Endothelial cell of umbilical vein (primary cell): ENCODE measurements at regions of chr9 and their contacts with region 1.

Region 1: GRCh38 chr9:136400038-136400834 is at the start of gene SNAPC4:
- DNase-seq: peak; percentile 82
- H3K4me3 ChIP-seq: peak within 1 kb of the TSS; percentile 55 to 96 (median 62)
- H3K27ac ChIP-seq: peak within 1 kb of the TSS; percentile 27
- H3K4me1 ChIP-seq: peaks cover 10% of the 10 kb centered on the region
- H3K27me3 ChIP-seq: no peaks in the 10 kb centered on the region
- CTCF ChIP-seq: peak; percentile 88 to 97
- POLR2A ChIP-seq: peak; percentile 90
- total RNA-seq, gene SNAPC4: 14.7 and 17.5 TPM in 2 replicates

Region 2: GRCh38 chr9:136051517-136052432 is 348.5 kb before region 1 on chr9:
- CTCF ChIA-PET with region 1: no interaction called
- POLR2A ChIA-PET with region 1: no interaction called
- dilution Hi-C with region 1: no loop called
- intact Hi-C with region 1: no loop called
- DNase-seq: peak; percentile 96
- H3K4me3 ChIP-seq: peak overlapping the region; percentile 49 to 66 (median 53)
- H3K27ac ChIP-seq: peak overlapping the region; percentile 66
- H3K4me1 ChIP-seq: peaks cover 33% of the 10 kb centered on the region
- H3K27me3 ChIP-seq: no peaks in the 10 kb centered on the region
- CTCF ChIP-seq: no peak
- POLR2A ChIP-seq: peak; percentile 47

Region 3: DNA sequence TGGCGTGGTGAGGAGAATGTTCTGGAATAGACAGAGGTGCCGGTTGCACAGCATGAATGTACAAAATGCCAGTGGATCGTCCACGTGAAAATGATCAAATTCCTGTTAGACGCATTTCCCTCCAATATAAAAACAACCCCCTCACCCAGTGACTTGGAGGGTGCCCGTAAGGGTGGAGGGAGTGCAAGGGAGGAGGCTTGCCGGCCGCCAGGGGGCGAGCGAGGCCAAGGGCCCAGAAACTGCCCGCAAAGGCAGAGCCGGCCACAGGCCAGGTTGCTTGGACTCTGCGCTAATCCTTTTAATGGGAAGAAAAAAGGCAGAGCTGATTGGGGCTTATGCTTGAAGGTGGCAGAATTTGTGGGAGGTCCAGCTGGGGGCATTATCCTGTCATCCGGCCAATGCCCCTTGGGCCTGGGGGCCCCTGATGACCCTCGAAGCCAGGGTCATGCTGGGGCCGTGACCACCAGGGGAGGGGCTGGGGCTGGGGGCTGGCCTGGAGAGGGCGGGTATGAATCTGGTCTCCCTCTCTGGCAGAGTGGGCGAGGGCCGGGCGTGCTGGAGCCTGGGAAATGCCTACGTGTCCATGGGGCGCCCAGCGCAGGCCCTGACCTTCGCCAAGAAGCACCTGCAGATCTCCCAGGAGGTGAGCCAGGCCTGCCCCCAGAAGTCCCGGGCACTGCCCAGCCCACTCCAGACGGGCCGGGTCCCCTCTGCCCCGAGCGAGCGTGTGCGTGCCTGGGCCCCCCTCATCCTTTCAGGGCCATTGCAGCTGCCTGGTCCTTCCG is 60.9 kb before region 1 on chr9:
- CTCF ChIA-PET with region 1: no interaction called
- POLR2A ChIA-PET with region 1: no interaction called
- dilution Hi-C with region 1: no loop called
- intact Hi-C with region 1: loop called (anchors 1 kb)
- DNase-seq: peak; percentile 49
- H3K4me3 ChIP-seq: no peak overlapping the region
- H3K27ac ChIP-seq: no peak overlapping the region
- H3K4me1 ChIP-seq: peaks cover 5% of the 10 kb centered on the region
- H3K27me3 ChIP-seq: no peaks in the 10 kb centered on the region
- CTCF ChIP-seq: peak; percentile 92 to 94
- POLR2A ChIP-seq: no peak

Region 4: DNA sequence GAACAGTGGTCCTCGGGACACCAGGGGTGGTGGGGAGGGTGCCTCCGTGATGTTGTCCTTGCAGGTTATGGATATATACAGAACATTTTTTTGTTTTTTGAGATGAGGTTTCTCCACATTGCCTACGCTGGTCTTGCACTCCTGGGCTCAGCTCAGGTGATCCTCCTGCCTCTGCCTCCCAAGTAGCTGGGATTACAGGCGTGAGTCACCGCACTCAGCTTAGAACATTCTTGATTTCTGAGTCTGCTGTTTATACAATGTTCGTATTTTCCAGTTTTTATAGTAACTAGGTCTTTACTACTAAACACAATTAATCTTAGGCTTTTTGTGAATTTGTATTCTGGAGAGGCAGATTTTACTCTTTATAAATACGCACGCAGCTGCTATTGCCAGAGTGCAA is 16.2 kb after region 1 on chr9:
- CTCF ChIA-PET with region 1: no interaction called
- POLR2A ChIA-PET with region 1: no interaction called
- dilution Hi-C with region 1: no loop called
- intact Hi-C with region 1: no loop called
- DNase-seq: no peak
- H3K4me3 ChIP-seq: no peak overlapping the region
- H3K27ac ChIP-seq: no peak overlapping the region
- H3K4me1 ChIP-seq: peaks cover 6% of the 10 kb centered on the region
- H3K27me3 ChIP-seq: no peaks in the 10 kb centered on the region
- CTCF ChIP-seq: no peak
- POLR2A ChIP-seq: no peak

Region 5: GRCh38 chr9:136438289-136438908 is 38.2 kb after region 1 on chr9:
- CTCF ChIA-PET with region 1: no interaction called
- POLR2A ChIA-PET with region 1: no interaction called
- dilution Hi-C with region 1: no loop called
- intact Hi-C with region 1: no loop called
- DNase-seq: peak; percentile 38
- H3K4me3 ChIP-seq: peak overlapping the region; percentile 33 to 76 (median 66)
- H3K27ac ChIP-seq: no peak overlapping the region
- H3K4me1 ChIP-seq: peaks cover 12% of the 10 kb centered on the region
- H3K27me3 ChIP-seq: no peaks in the 10 kb centered on the region
- CTCF ChIP-seq: no peak
- POLR2A ChIP-seq: no peak